Posterior vena cava (tissue), 2 donors: ENCODE measurements at regions of chr6 and their contacts with region 1.

Region 1: GRCh38 chr6:37018198-37019064 is 13.0 kb downstream of the FGD2 start:
- DNase-seq: peak; percentile 96

Region 2: DNA sequence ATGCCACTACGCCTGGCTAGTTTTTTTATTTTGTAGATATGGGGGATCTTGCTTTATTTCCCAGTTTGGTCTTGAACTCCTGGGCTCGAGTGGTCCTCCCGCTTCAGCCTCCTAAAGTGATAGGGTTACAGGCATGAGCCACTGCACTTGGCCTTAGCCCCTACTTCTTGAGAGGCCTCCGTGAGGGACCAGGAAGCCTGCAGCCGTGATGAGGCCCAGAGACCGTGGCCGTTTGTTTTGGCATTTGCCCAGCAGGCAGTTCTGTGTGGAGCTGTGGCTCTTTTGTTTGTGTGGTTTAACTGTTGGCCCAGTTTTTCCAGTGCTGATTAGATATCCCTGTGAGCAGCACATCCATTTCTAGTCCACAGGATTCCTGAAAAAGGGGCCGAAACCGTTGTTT is 384.5 kb before region 1 on chr6:
- intact Hi-C with region 1: no loop called
- DNase-seq: no peak

Region 3: GRCh38 chr6:36885461-36886401 is 132.7 kb before region 1 on chr6 and contains the start of gene C6orf89:
- intact Hi-C with region 1: loop called in 1 of 2 experiments (anchors 10 kb)
- DNase-seq: peak; percentile 99
- total RNA-seq, gene C6orf89: 56.5 to 59.9 TPM

Region 4: GRCh38 chr6:36963451-36964290 is 54.8 kb before region 1 on chr6:
- intact Hi-C with region 1: no loop called
- DNase-seq: peak; percentile 79

Region 5: DNA sequence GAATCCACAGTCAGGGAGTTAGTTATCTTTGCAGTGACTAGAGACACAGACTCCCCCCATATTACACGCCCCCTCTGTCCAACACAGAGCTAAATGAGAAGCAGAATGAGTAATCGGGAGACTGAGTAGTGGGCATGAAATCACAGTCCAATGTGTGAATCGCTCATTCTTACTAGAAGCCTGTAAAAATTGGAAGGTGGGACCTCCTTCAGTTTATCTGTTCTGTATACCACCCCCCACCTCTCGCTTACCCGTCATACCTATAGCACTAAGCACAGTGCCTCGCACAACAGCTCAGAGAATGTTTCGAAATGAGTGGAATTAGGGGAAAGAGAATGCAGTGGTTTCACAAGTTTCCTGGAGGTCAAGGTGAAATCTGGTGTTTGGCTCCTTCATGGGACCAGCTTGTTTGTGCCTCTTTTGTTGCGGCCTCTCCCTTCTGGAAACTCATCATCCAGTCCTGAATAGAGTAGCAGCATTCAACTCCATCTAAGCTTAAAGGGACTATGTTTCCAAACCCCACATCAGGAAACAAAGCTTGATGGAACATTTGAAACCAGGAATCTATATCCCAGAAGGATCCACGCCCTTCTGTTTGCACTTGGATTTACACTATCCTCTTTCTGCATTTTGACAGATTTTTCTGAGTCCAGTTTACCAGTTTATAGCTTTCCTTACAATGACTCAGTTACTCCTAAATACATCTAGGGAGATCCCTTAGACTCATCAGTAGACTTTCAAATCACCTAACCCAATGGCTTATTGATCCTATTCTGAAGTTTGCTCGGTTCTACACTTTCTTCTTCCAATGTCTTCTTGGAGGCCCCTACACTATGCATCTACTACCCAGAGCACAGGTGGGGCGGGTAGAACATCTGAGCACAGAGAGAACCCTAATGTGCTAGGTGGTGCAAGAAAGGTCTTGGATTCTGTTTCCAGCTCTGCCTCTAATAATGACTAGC is 92.3 kb after region 1 on chr6:
- intact Hi-C with region 1: no loop called
- DNase-seq: no peak